Activated CD4-positive, alpha-beta memory T cell treated with anti-CD3 and anti-CD28 coated beads for 36 hours (primary cell): ENCODE measurements at regions of chr3 and their contacts with region 1.

Region 1: DNA sequence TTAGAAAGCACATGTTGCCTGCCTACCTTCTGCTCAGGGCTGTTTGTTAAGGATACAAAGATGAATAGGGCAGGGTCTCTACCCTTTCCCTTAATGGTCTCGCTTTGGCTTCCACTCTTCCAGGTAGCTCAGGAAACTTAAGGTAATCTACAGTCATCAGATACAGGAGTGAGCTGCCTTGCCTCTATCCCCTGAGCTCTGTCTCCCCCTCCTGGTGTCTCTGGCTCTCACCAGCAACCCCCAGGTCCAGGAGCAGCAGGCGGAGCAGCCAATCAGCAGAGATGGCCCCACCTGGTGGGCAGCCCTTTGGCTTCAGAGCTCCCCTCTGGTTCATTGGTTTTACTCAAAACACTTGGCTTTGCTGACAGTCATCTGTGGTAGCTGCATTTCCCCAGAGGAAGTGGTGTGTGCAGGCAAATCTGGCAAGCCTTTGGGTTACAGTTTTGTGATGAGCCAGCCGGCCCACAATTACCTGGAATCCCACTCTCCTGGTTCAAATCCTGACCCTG is 8.5 kb upstream of the CX3CR1 start:
- DNase-seq: peak; percentile 91
- H3K4me3 Mint-ChIP-seq: no peak overlapping the region
- H3K27ac Mint-ChIP-seq: peak overlapping the region; percentile 13
- H3K4me1 Mint-ChIP-seq: peaks cover 24% of the 10 kb centered on the region
- H3K27me3 Mint-ChIP-seq: no peaks in the 10 kb centered on the region

Region 2: GRCh38 chr3:39101022-39101689 is 187.2 kb before region 1 on chr3:
- CTCF ChIA-PET with region 1: interaction called, 57 read pairs
- POLR2A ChIA-PET with region 1: no interaction called
- intact Hi-C with region 1: loop called (anchors 1 kb)
- DNase-seq: peak; percentile 53
- H3K4me3 Mint-ChIP-seq: no peak overlapping the region
- H3K27ac Mint-ChIP-seq: no peak overlapping the region
- H3K4me1 Mint-ChIP-seq: peaks cover 23% of the 10 kb centered on the region
- H3K27me3 Mint-ChIP-seq: no peaks in the 10 kb centered on the region

Region 3: DNA sequence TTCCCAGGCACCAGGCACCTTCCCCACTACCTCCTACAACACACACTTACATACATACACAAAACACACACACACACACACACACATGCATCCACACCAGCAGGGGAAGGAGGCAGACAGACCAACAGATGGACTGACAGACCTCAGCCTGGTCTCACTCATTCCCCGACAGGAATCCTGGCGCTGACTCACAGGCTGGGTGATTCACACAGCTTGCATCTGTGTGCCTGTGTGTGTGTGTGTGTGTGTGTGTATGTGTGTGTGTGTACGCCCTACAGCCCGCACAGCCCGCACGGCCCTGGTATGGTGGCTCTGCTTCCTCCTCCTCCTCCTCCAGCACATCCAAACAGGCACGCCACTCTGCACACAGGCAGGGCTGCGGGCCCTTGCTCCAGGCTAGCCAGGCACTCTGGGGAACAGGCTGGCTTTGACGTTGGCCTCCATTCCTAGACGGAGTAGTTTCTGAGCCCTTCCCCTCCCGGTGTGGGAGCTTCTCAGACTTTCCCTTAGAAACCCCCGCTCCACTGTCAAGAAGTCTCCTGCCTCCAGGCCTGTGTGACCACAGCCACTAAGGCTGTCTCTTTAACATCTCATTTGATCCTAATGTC is 141.3 kb before region 1 on chr3:
- CTCF ChIA-PET with region 1: interaction called, 10 read pairs
- POLR2A ChIA-PET with region 1: no interaction called
- intact Hi-C with region 1: no loop called
- DNase-seq: peak; percentile 90
- H3K4me3 Mint-ChIP-seq: peak overlapping the region; percentile 92
- H3K27ac Mint-ChIP-seq: peak overlapping the region; percentile 97
- H3K4me1 Mint-ChIP-seq: peaks cover 70% of the 10 kb centered on the region
- H3K27me3 Mint-ChIP-seq: no peaks in the 10 kb centered on the region

Region 4: GRCh38 chr3:39216176-39216790 is 72.1 kb before region 1 on chr3:
- CTCF ChIA-PET with region 1: interaction called, 62 read pairs
- POLR2A ChIA-PET with region 1: no interaction called
- intact Hi-C with region 1: no loop called
- DNase-seq: no peak
- H3K4me3 Mint-ChIP-seq: no peak overlapping the region
- H3K27ac Mint-ChIP-seq: no peak overlapping the region
- H3K4me1 Mint-ChIP-seq: peaks cover 9% of the 10 kb centered on the region
- H3K27me3 Mint-ChIP-seq: peaks cover 4% of the 10 kb centered on the region

Region 5: GRCh38 chr3:39273119-39273518 is 15.2 kb before region 1 on chr3:
- CTCF ChIA-PET with region 1: interaction called, 52 read pairs
- POLR2A ChIA-PET with region 1: interaction called, 3 read pairs
- intact Hi-C with region 1: no loop called
- DNase-seq: no peak
- H3K4me3 Mint-ChIP-seq: no peak overlapping the region
- H3K27ac Mint-ChIP-seq: no peak overlapping the region
- H3K4me1 Mint-ChIP-seq: peaks cover 8% of the 10 kb centered on the region
- H3K27me3 Mint-ChIP-seq: no peaks in the 10 kb centered on the region

Region 6: GRCh38 chr3:39378088-39378487 is 89.7 kb after region 1 on chr3:
- CTCF ChIA-PET with region 1: interaction called, 158 read pairs
- POLR2A ChIA-PET with region 1: no interaction called
- intact Hi-C with region 1: loop called (anchors 1 kb)
- DNase-seq: peak; percentile 73
- H3K4me3 Mint-ChIP-seq: no peak overlapping the region
- H3K27ac Mint-ChIP-seq: no peak overlapping the region
- H3K4me1 Mint-ChIP-seq: peaks cover 5% of the 10 kb centered on the region
- H3K27me3 Mint-ChIP-seq: no peaks in the 10 kb centered on the region